Activated CD4-positive, alpha-beta T cell treated with anti-CD3 and anti-CD28 coated beads, Interleukin-2, amount 10 ng/mL, durations not matched to agents 24 days and 14 days (primary cell): ENCODE measurements at regions of chr1 and their contacts with region 1.

Region 1: DNA sequence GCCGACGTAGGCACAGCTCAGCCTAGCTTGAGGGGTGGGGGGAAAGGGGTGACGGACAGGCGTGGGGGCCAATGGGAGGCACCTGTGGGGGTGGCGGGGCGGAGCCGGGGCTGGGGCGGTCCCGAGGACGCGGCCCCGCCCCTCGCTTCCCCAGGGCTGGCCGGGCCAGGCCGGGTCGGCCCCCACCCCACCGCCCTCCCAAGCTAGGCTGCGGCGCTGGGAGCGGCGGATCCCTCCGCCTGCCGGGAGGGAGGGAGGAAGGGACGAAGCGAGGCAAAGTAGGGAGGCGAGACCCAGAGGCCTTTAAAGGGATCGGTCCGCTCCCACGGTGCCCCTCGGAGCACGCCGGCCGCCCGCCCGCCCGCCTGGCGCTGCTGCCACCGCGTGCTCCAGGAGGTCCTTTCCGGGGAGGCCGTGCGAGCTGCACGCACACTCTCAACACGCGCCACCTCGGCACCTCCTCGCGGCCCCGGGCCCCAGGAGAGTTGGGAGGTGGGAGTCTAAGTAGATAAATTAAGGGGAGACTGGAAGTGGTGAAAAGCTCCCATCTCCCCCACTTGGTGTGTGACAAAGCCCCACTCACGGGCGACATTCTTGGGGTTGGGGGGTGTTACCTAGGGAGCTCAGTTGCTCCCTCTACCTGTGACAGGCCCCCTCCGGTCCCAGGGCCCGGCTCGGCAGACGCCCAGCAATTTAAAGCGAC is 373 bp upstream of the MEF2D start:
- DNase-seq: peak; percentile 97
- H3K4me3 Mint-ChIP-seq: peak overlapping the region; percentile 91
- H3K27ac Mint-ChIP-seq: peak overlapping the region; percentile 96
- H3K4me1 Mint-ChIP-seq: peaks cover 66% of the 10 kb centered on the region
- H3K27me3 Mint-ChIP-seq: no peaks in the 10 kb centered on the region

Region 2: GRCh38 chr1:156054500-156055280 is 446.3 kb before region 1 on chr1 and contains the start of gene LAMTOR2:
- intact Hi-C with region 1: loop called (anchors 10 kb)
- DNase-seq: peak; percentile 99
- H3K4me3 Mint-ChIP-seq: peak within 1 kb of the TSS; percentile 98
- H3K27ac Mint-ChIP-seq: peak within 1 kb of the TSS; percentile 89
- H3K4me1 Mint-ChIP-seq: peaks cover 30% of the 10 kb centered on the region
- H3K27me3 Mint-ChIP-seq: no peaks in the 10 kb centered on the region
- total RNA-seq, gene LAMTOR2: 69.9 and 73.0 TPM in 2 replicates

Region 3: GRCh38 chr1:156212833-156213643 is 287.9 kb before region 1 on chr1 and contains the start of gene PMF1:
- intact Hi-C with region 1: loop called (anchors 10 kb)
- DNase-seq: peak; percentile 98
- H3K4me3 Mint-ChIP-seq: peak within 1 kb of the TSS; percentile 98
- H3K27ac Mint-ChIP-seq: peak within 1 kb of the TSS; percentile 99
- H3K4me1 Mint-ChIP-seq: peaks cover 38% of the 10 kb centered on the region
- H3K27me3 Mint-ChIP-seq: no peaks in the 10 kb centered on the region
- total RNA-seq, gene PMF1: 107 and 113 TPM in 2 replicates

Region 4: DNA sequence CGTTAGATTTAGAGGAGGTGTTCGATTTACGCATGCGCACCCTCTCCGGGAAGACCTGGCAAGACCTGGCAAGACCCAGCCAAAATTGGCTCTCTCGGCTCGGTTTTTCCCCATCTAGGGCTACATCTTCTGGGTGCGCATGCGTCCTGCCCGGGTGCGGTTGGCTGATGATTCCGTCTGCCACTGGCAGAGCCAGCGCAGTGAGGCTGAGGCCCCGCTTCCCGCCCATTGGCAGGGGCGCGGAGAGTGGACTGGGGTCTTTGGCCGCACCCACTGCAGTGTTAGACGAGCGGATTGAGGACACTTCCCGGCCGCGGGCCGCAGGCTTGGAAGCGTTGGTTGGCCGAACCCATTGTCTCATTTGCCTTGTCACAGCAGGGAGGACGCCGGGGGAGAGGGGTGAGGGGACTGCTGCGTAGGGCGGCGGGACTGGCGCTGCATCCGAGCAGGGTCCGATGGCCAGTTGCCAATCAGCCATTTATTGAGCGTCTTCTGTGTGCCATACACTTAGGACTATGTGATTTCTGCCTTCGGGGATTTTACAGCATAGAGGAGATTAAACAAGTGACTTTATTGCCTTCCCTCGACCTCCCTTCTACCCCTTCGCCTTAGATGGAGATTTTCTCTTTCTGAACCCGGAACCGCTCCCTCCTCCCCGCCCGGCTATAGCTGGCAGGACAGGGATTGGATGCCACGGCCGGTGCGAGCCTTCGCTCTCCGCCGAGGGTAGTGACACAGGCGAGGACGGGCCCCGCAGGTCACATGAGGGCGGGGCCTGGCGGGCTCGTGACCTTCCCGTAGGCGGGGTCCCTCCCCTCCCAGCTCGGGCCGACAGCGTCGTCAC is 44.1 kb before region 1 on chr1:
- intact Hi-C with region 1: loop called (anchors 1 kb)
- DNase-seq: peak; percentile 98
- H3K4me3 Mint-ChIP-seq: peak overlapping the region; percentile 92
- H3K27ac Mint-ChIP-seq: peak overlapping the region; percentile 98
- H3K4me1 Mint-ChIP-seq: peaks cover 16% of the 10 kb centered on the region
- H3K27me3 Mint-ChIP-seq: peaks cover 14% of the 10 kb centered on the region

Region 5: DNA sequence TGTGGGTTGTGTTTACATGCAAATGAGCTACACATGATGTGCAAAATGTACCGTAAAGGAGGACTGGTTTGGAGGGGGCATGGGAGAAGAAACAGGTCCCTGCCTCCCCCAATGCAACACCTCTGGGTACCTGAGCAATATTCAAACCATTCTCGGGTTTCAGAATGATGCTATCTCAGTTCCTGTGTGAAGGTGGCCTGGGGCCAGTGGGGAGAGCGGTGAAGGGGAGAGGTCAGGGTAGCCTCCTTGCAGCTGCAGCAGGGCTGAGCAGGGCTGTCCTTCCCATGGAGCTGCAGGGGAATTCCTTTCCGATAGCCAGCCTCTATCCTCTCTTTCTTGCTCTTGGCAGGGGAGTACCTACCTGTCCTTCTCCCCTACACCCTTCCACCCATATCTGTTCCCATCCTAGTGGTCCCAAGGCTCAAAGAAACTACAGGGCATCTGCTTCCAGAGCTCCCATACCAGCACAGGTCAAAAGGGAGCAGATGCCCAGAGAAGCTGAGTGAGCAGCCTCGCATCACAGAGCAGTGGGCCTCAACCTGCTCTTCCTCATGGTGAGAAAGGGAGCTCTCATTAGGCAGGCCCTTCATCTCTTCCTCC is 12.3 kb before region 1 on chr1:
- intact Hi-C with region 1: loop called (anchors 1 kb)
- DNase-seq: peak; percentile 74
- H3K4me3 Mint-ChIP-seq: peak overlapping the region; percentile 66
- H3K27ac Mint-ChIP-seq: peak overlapping the region; percentile 79
- H3K4me1 Mint-ChIP-seq: peaks cover 66% of the 10 kb centered on the region
- H3K27me3 Mint-ChIP-seq: no peaks in the 10 kb centered on the region

Region 6: DNA sequence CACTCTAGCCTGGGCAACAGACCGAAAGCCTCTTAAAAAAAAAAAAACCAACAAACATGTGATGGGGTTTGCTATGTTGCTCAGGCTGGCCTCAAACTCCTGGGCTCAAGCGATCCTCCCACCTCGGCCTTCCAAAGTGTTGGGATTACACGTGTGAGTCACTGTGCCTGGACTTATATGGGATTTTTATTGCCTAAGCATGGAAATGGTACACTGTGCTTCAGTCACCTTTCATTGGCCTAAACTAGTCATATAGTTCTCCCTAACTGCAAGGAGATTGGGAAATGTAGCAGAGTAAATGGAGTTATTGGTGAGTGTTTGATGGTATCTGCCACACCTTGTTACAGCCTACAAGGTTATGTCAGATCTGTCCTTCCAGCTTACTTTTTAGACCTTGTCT is 16.8 kb after region 1 on chr1:
- intact Hi-C with region 1: no loop called
- DNase-seq: no peak
- H3K4me3 Mint-ChIP-seq: no peak overlapping the region
- H3K27ac Mint-ChIP-seq: no peak overlapping the region
- H3K4me1 Mint-ChIP-seq: no peaks in the 10 kb centered on the region
- H3K27me3 Mint-ChIP-seq: peaks cover 8% of the 10 kb centered on the region

Region 7: DNA sequence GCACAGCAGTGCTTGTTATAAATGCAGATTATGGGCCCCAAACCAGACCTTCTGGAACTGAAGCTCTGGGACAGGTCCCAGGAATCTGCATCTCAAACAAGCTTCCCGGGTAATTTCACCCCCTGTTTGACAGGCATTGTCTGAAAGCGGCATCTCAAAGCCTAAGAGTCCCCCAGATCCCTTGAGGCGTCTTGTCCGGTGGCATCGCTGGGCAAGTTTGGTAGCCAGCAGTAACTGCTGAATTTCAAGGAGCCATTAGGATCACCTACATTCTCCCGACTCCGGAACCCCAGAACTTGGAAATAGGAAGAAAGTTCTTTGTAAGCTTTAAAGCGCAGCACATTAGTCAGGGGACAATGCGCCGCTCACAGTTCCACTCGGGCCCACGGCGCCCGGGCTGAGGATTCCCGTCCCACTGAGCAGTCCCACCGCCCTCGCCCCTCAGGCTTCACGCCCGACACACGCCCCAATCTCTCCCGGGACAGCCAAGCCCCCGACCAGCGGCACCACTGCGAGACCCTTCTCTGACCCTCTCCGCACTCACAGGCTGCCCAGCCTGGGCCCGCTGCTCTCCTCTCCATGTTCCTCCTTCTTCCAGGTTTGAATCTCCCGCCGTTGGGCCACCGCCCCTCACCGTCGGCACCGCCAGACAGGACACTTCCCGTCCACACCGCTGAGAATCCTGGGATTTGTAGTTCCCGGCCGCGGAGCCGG is 71.2 kb after region 1 on chr1 and contains the start of gene IQGAP3:
- intact Hi-C with region 1: loop called (anchors 1 kb)
- DNase-seq: peak; percentile 94
- H3K4me3 Mint-ChIP-seq: peak within 1 kb of the TSS; percentile 92
- H3K27ac Mint-ChIP-seq: peak within 1 kb of the TSS; percentile 77
- H3K4me1 Mint-ChIP-seq: peaks cover 22% of the 10 kb centered on the region
- H3K27me3 Mint-ChIP-seq: peaks cover 22% of the 10 kb centered on the region
- total RNA-seq, gene IQGAP3: 10.5 and 11.2 TPM in 2 replicates

Region 8: GRCh38 chr1:156625436-156626078 is 124.6 kb after region 1 on chr1:
- intact Hi-C with region 1: no loop called
- DNase-seq: peak; percentile 90
- H3K4me3 Mint-ChIP-seq: peak overlapping the region; percentile 84
- H3K27ac Mint-ChIP-seq: peak overlapping the region; percentile 50
- H3K4me1 Mint-ChIP-seq: peaks cover 9% of the 10 kb centered on the region
- H3K27me3 Mint-ChIP-seq: peaks cover 60% of the 10 kb centered on the region

Region 9: GRCh38 chr1:156767101-156767878 is 266.3 kb after region 1 on chr1 and contains the start of gene PRCC:
- intact Hi-C with region 1: loop called (anchors 1 kb)
- DNase-seq: peak; percentile 99
- H3K4me3 Mint-ChIP-seq: no peak within 1 kb of the TSS
- H3K27ac Mint-ChIP-seq: peak within 1 kb of the TSS; percentile 79
- H3K4me1 Mint-ChIP-seq: peaks cover 33% of the 10 kb centered on the region
- H3K27me3 Mint-ChIP-seq: no peaks in the 10 kb centered on the region
- total RNA-seq, gene PRCC: 106 and 120 TPM in 2 replicates